Activated B cell treated with CpG ODN at 0.5 μM for 24 hours (primary cell): ENCODE measurements at regions of chr10 and their contacts with region 1.

Region 1: GRCh38 chr10:14904316-14904732 is 25.7 kb downstream of the SUV39H2 start:
- DNase-seq: no peak
- ATAC-seq: peak; percentile 77
- H3K4me3 Mint-ChIP-seq: no peak overlapping the region
- H3K27ac Mint-ChIP-seq: no peak overlapping the region
- H3K4me1 Mint-ChIP-seq: peaks cover 4% of the 10 kb centered on the region
- H3K27me3 Mint-ChIP-seq: no peaks in the 10 kb centered on the region
- CTCF ChIP-seq: peak; percentile 46

Region 2: DNA sequence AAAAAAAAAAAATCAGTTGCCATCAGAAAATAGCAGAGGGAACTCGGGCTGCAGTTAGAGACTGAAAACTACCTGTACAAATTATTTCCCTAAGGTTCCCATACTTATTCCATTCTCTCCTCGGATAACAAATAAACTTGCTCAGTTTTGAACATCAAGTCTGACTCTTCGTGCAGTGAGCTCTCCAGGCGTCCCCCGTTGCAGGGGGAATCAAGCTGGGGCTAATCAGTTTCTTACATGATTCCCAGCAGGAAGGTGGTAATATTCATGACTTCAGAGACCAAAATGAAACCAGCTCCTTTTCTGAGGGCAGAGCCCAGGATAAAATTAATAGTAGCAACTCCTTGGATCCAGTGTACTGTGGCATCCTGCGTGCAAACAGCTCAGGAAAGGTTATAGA is 708.9 kb before region 1 on chr10:
- CTCF ChIA-PET with region 1: interaction called, 3 read pairs
- POLR2A ChIA-PET with region 1: no interaction called
- intact Hi-C with region 1: loop called (anchors 2 kb)
- DNase-seq: no peak
- ATAC-seq: no peak
- H3K4me3 Mint-ChIP-seq: no peak overlapping the region
- H3K27ac Mint-ChIP-seq: no peak overlapping the region
- H3K4me1 Mint-ChIP-seq: peaks cover 5% of the 10 kb centered on the region
- H3K27me3 Mint-ChIP-seq: peaks cover 36% of the 10 kb centered on the region
- CTCF ChIP-seq: no peak

Region 3: DNA sequence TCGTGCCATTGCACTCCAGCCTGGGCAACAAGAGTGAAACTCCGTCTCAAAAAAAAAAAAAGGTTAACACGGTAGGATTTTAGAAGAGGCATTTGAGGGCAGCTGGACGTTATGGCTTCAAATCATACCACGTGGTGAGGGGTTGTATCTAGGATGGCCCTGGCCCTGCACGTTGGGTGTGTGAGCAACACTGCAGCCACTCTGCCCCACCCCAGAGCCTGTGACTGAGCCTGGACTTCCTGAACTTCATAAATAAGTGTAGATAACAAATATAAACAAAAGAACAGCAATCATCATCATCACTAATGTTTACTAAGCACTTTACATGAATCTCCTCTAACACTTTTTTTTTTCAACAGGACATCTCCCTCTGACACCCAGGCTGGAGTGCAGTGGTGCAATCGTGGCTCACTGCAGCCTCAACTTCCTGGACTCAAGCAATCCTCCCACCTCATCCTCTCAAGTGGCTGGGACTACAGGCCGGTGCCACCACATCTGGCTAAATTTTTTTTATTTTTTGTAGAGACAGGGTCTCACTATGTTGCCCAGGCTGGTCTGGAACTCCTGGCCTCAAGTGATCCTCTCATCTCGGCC is 404.1 kb before region 1 on chr10:
- CTCF ChIA-PET with region 1: no interaction called
- POLR2A ChIA-PET with region 1: no interaction called
- intact Hi-C with region 1: loop called (anchors 1 kb)
- DNase-seq: no peak
- ATAC-seq: no peak
- H3K4me3 Mint-ChIP-seq: no peak overlapping the region
- H3K27ac Mint-ChIP-seq: no peak overlapping the region
- H3K4me1 Mint-ChIP-seq: peaks cover 18% of the 10 kb centered on the region
- H3K27me3 Mint-ChIP-seq: no peaks in the 10 kb centered on the region
- CTCF ChIP-seq: no peak

Region 4: GRCh38 chr10:16381083-16381482 is 1476.8 kb after region 1 on chr10:
- CTCF ChIA-PET with region 1: no interaction called
- POLR2A ChIA-PET with region 1: no interaction called
- intact Hi-C with region 1: no loop called
- DNase-seq: no peak
- ATAC-seq: no peak
- H3K4me3 Mint-ChIP-seq: no peak overlapping the region
- H3K27ac Mint-ChIP-seq: no peak overlapping the region
- H3K4me1 Mint-ChIP-seq: no peaks in the 10 kb centered on the region
- H3K27me3 Mint-ChIP-seq: peaks cover 3% of the 10 kb centered on the region
- CTCF ChIP-seq: no peak